MCF 10A (cell line): ENCODE measurements at regions of chr3 and their contacts with region 1.

Region 1: GRCh38 chr3:66500576-66501482 is at the start of gene LRIG1:
- DNase-seq: peak; percentile 98
- H3K4me3 Mint-ChIP-seq: peak within 1 kb of the TSS; percentile 79
- H3K27ac Mint-ChIP-seq: no peak within 1 kb of the TSS
- H3K4me1 Mint-ChIP-seq: peaks cover 33% of the 10 kb centered on the region
- H3K27me3 Mint-ChIP-seq: no peaks in the 10 kb centered on the region
- CTCF ChIP-seq: no peak
- total RNA-seq, gene LRIG1: 15.2 and 17.2 TPM in 2 replicates

Region 2: DNA sequence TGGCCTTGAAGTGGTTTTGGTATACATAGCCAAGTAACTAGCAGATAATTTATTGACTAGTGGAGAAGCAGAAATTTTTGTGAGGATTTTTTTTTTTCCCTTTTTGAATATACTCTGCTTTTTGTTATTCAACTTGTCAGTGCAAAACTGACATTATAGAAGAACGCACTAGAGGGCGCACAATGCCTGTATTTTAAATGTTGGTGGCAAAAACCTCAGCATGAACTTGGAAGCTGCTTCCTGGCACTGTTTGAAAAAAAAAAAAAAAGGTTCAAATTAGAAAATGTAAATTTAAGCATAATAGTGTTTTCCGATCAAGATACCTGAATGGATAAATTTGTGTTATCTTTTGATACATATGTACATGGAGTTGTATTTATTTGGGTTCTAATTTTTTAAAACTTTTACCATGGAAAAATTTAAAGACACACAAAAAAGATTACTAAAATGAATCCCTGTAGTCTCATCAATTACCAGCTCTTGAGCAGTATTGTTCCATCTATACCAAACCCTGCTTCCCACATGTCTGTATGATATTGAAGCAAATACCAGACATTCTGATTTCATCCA is 224.0 kb before region 1 on chr3:
- CTCF ChIA-PET with region 1: no interaction called
- POLR2A ChIA-PET with region 1: no interaction called
- intact Hi-C with region 1: loop called (anchors 5 kb)
- DNase-seq: peak; percentile 68
- H3K4me3 Mint-ChIP-seq: no peak overlapping the region
- H3K27ac Mint-ChIP-seq: no peak overlapping the region
- H3K4me1 Mint-ChIP-seq: no peaks in the 10 kb centered on the region
- H3K27me3 Mint-ChIP-seq: no peaks in the 10 kb centered on the region
- CTCF ChIP-seq: peak; percentile 56

Region 3: DNA sequence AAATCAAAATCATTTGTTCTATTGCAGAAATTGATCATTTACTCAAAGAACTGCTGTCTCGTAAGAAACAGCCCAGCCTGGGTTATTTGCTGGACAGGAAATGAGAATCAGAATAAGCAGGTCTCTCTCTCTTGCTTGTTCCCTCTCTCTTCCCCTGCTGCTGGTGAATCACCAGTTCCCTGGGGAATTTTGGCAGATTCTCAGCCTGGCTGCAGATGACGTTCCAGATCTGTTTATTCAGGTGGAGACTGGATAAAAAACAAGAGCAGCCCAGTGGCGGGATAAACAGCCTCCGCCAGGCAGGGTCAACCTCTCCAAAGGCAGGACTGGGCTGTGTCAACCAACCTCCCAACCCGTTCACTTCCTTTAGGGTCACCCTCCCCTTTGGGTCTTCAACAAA is 72.1 kb before region 1 on chr3:
- CTCF ChIA-PET with region 1: no interaction called
- POLR2A ChIA-PET with region 1: interaction called, 5 read pairs
- intact Hi-C with region 1: loop called (anchors 5 kb)
- DNase-seq: peak; percentile 97
- H3K4me3 Mint-ChIP-seq: peak overlapping the region; percentile 62
- H3K27ac Mint-ChIP-seq: peak overlapping the region; percentile 93
- H3K4me1 Mint-ChIP-seq: peaks cover 49% of the 10 kb centered on the region
- H3K27me3 Mint-ChIP-seq: no peaks in the 10 kb centered on the region
- CTCF ChIP-seq: no peak

Region 4: DNA sequence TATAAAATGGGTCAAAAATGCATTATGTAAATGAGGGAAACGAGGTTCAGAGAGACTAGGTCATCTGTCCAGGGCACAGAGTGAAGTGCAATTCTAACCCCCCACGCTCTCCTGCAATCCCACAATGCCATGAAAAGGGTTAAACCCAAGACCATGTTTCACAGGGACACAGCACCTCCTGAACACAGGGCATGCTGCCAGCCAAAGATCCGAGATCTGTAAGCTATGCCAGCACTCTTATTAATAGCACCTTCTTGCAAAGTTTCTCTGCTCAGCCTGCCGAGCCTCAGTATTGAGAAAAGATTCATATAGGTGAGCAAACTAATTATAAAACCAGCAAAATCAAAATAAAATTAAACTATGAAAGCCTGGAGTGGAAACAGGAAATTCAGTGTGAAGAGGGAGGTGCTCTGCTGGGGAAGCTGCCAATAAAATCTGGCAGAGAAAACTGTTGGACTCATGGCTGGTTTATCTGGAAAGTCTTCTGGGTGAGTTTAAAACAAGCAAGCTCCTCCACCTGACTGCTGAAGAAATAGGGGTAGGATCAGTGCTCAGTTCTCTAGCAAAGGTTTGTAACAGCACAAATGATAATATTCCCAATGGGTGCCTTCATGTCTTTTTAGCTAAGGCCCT is 50.3 kb before region 1 on chr3:
- CTCF ChIA-PET with region 1: no interaction called
- POLR2A ChIA-PET with region 1: no interaction called
- intact Hi-C with region 1: no loop called
- DNase-seq: peak; percentile 69
- H3K4me3 Mint-ChIP-seq: peak overlapping the region; percentile 62
- H3K27ac Mint-ChIP-seq: peak overlapping the region; percentile 61
- H3K4me1 Mint-ChIP-seq: peaks cover 19% of the 10 kb centered on the region
- H3K27me3 Mint-ChIP-seq: no peaks in the 10 kb centered on the region
- CTCF ChIP-seq: no peak

Region 5: DNA sequence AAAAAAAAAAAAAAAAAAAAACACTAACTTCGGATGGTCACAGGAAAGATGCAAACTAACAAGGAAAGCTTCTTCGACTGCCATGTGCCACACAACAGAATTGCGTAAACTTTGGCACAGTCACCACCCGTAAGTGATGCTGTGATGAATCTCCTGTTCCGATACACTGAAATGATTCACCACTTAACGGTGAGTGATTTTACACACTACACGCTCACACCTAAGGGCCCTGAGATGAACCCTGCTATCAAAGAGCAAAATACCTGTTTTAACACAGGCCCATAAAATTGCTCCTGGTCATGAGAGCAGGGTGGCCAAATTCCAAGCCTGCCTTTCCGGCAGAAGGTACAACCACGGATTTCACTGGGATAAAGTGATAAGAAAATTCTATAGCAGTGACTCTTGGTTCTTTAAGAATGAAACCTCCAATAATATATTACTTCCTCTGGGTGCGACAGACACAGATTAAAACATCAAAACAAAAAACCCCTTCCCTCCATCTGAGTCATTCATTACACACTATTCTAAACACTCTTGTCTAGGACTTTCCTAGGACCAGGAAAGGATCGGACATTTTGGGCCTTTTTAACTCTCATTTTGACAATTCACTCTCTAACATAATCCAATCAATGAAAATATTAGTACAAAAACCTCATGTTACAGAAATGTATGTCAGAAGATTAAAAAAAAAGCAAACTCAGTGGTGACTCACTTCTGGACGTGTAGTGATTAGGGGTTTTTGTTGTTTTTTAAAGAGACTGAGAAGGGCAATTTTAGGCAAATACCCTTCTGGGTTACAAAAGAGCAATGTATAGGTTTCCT is 28.3 kb before region 1 on chr3:
- CTCF ChIA-PET with region 1: no interaction called
- POLR2A ChIA-PET with region 1: interaction called, 3 read pairs
- intact Hi-C with region 1: loop called (anchors 2 kb)
- DNase-seq: peak; percentile 86
- H3K4me3 Mint-ChIP-seq: peak overlapping the region; percentile 12
- H3K27ac Mint-ChIP-seq: peak overlapping the region; percentile 76
- H3K4me1 Mint-ChIP-seq: peaks cover 8% of the 10 kb centered on the region
- H3K27me3 Mint-ChIP-seq: no peaks in the 10 kb centered on the region
- CTCF ChIP-seq: no peak

Region 6: DNA sequence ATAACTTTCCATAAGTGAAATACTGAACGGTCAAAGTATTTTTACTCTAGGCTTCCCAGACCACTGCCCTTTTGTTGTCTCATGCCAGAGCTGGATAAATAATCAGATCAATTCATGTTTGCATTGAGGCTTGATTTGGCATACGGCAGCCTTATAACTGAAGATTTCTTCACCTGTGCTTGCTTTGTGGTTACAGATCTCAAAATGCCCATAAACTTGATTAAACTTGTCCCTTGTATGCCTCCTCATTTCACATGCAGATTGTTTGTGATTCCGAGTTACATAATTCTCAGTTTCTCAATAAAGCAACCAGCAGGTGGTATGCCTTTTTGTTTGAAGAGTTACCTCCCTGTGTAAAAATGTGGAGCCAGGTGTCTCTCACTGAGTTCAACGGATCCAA is 211.4 kb after region 1 on chr3:
- CTCF ChIA-PET with region 1: no interaction called
- POLR2A ChIA-PET with region 1: no interaction called
- intact Hi-C with region 1: loop called (anchors 10 kb)
- DNase-seq: peak; percentile 72
- H3K4me3 Mint-ChIP-seq: no peak overlapping the region
- H3K27ac Mint-ChIP-seq: no peak overlapping the region
- H3K4me1 Mint-ChIP-seq: no peaks in the 10 kb centered on the region
- H3K27me3 Mint-ChIP-seq: no peaks in the 10 kb centered on the region
- CTCF ChIP-seq: no peak

Region 7: DNA sequence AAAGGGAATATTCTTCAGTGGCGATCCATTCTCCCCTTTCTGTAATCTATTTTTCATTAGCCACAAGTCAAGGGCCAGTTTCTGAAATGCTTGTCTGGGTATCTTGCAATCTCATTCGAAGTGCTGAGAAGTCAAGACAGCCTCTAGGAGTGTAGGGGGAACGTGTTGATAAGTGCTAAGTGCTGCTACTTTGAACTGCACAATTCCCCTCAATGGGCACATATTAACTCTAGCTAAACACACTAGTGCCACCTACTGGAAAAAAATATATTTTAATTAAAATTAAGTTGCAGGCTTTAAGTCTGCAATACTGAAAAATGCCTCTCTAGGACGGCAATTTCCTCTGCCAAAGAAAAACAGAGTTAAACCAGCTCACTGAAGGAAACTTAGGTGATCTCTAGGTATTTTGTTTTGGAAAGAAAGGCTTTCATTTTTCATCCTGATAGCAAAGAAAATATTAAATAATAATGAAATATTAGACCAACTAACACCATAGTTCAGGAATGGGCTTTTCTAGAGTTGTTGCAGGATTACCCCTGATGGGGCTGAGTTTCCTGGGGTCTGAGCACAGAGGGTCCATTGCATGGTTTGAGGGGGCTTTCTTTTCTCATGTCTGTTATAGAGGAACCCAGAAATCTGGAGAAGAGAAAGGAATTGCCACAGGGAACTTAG is 315.4 kb after region 1 on chr3:
- CTCF ChIA-PET with region 1: no interaction called
- POLR2A ChIA-PET with region 1: no interaction called
- intact Hi-C with region 1: loop called (anchors 2 kb)
- DNase-seq: peak; percentile 57
- H3K4me3 Mint-ChIP-seq: no peak overlapping the region
- H3K27ac Mint-ChIP-seq: no peak overlapping the region
- H3K4me1 Mint-ChIP-seq: peaks cover 7% of the 10 kb centered on the region
- H3K27me3 Mint-ChIP-seq: peaks cover 11% of the 10 kb centered on the region
- CTCF ChIP-seq: peak; percentile 51